OCI-LY7 (cell line): ENCODE measurements at regions of chr10 and their contacts with region 1.

Region 1: DNA sequence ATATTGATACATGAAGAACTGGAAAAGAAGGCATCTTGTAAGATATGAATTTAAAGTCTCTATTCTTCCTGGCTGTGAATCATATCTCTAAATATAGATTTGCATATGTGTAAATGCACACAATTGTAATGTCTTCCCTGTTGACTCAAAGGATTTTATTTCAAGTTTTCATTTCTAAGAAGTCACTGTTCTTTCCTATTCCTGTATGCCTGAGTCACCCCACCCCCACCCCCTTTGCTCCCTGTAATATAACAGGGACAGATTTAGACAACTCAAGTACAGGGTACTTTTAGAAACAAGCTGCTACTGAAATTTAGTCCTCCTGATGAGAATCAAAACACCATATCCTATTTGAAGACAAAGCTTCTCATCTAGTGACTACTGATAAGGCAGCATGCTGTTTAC is 43.0 kb upstream of the HECTD2 start:
- DNase-seq: no peak
- H3K4me3 ChIP-seq: no peak overlapping the region
- H3K27ac ChIP-seq: no peak overlapping the region
- H3K4me1 ChIP-seq: no peaks in the 10 kb centered on the region
- CTCF ChIP-seq: no peak

Region 2: GRCh38 chr10:90378524-90379076 is 988.5 kb before region 1 on chr10:
- CTCF ChIA-PET with region 1: no interaction called
- POLR2A ChIA-PET with region 1: no interaction called
- intact Hi-C with region 1: no loop called
- DNase-seq: no peak
- H3K4me3 ChIP-seq: no peak overlapping the region
- H3K27ac ChIP-seq: no peak overlapping the region
- H3K4me1 ChIP-seq: no peaks in the 10 kb centered on the region
- CTCF ChIP-seq: no peak

Region 3: GRCh38 chr10:91227576-91227975 is 139.6 kb before region 1 on chr10:
- CTCF ChIA-PET with region 1: no interaction called
- POLR2A ChIA-PET with region 1: no interaction called
- intact Hi-C with region 1: no loop called
- DNase-seq: no peak
- H3K4me3 ChIP-seq: no peak overlapping the region
- H3K27ac ChIP-seq: no peak overlapping the region
- H3K4me1 ChIP-seq: peaks cover 8% of the 10 kb centered on the region
- CTCF ChIP-seq: no peak

Region 4: DNA sequence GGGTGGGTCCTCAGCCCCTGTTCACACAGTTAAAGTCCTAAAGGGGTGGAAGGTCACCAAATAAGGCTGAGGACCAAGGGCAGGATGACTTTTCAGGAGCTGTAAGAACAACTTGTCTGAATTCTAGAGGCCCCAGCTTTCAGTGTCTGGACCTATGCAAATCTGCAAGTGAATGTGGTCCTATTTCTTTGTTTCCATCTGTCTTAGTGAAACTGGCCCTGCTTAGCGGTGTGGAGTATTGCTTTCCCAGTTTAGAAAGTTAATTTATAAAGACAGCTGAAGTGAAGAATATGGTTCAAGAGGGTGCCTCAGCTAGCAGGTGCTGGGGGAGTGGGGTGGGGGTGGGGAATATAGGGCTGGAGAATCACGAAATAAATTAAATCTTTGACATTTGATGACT is 1362.8 kb after region 1 on chr10:
- CTCF ChIA-PET with region 1: no interaction called
- POLR2A ChIA-PET with region 1: interaction called, 11 read pairs
- intact Hi-C with region 1: no loop called
- DNase-seq: peak; percentile 90
- H3K4me3 ChIP-seq: peak overlapping the region; percentile 30
- H3K27ac ChIP-seq: peak overlapping the region; percentile 79
- H3K4me1 ChIP-seq: peaks cover 76% of the 10 kb centered on the region
- CTCF ChIP-seq: no peak